ENCODE measurements at regions of chr1 and their contacts with region 1.

Region 1: GRCh38 chr1:84944767-84945486 is 51.9 kb upstream of the LPAR3 start:
- DNase-seq: peak; percentile 65
- H3K4me3 ChIP-seq: peak overlapping the region; percentile 46
- CTCF ChIP-seq: peak; percentile 75

Region 2: DNA sequence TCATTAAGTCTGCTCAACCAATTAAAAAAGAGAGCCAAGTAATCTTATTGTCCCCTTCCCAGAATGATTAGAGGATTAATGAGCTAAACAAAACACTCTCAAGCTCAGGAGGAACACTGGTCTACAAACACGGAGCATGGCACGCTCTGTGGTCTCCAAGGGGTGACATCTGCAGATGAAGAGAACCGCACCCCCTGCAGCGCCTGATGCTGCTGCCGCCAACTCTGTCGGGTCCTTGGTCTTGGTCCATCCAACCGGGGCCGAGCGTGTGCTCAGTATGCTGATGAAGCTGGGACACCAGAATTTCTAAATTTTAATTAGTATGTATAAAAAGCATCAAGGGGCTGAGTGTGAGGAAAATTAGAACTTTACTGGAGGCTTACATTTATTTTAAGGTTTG is 134.6 kb before region 1 on chr1:
- CTCF ChIA-PET with region 1: no interaction called
- POLR2A ChIA-PET with region 1: no interaction called
- DNase-seq: no peak
- H3K4me3 ChIP-seq: no peak overlapping the region
- CTCF ChIP-seq: no peak

Region 3: DNA sequence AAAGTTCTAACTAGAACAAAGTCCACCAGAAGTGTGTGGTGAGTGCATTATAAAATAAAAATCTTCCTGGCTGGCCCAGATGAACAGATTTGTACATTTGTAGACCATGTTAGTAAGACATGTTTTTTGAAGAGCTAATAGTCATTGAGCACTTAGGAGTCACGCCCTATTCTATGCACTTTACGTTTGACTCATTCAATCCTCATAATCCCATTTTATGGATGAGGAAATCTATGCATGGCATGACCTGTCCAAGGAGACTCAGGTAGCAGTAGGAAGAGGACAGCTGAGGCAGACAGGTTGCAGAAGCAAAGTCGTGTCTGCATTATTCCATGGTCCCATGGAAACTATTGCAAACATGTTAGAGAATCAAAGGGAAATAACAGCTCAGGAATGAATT is 21.6 kb before region 1 on chr1:
- CTCF ChIA-PET with region 1: interaction called, 12 read pairs
- POLR2A ChIA-PET with region 1: no interaction called
- DNase-seq: no peak
- H3K4me3 ChIP-seq: no peak overlapping the region
- CTCF ChIP-seq: no peak

Region 4: DNA sequence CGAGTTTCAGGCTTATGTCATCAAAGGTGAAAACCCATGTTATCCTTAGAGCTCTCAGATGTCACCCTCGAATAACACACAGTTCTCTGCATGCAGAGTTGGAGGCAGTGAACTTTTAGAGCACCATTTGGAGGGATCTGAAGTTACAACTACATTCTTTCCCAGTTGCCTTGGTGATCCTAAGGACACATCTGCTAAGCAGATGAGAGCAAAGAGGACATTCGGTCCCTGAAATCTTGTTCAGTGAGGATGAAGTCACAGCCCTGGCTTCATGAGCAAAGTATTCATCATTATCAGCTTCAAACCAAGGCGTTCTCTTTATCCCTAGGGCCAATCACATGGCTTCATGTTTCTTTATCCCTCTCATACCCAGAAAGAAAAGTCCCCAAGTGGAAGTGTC is 75.1 kb after region 1 on chr1:
- CTCF ChIA-PET with region 1: interaction called, 124 read pairs
- POLR2A ChIA-PET with region 1: no interaction called
- DNase-seq: peak; percentile 26
- H3K4me3 ChIP-seq: no peak overlapping the region
- CTCF ChIP-seq: no peak

Region 5: GRCh38 chr1:85048296-85049064 is 103.6 kb after region 1 on chr1 and contains the start of gene MCOLN3:
- CTCF ChIA-PET with region 1: interaction called, 10 read pairs
- POLR2A ChIA-PET with region 1: no interaction called
- DNase-seq: no peak
- H3K4me3 ChIP-seq: peak within 1 kb of the TSS; percentile 36
- CTCF ChIP-seq: no peak

Region 6: DNA sequence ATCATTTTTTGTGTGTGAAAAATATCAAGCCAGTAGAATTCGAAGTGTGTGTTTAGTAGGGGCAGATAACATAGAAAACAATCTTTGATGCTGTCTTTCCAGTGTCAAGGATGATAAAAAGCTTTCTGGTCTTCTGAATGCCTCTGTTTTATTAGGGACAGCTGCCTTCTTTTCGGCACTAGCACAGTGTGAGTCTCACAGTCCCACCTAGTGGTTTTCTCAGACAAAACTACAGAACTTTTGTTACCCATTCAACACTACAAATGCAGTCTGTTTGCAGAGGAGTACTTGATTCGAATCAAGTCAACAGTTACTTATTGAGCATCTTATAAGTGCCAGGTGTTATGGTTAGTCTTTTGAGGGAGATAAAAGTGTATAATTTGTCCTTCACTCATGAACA is 134.0 kb after region 1 on chr1:
- CTCF ChIA-PET with region 1: interaction called, 147 read pairs
- POLR2A ChIA-PET with region 1: no interaction called
- DNase-seq: no peak
- H3K4me3 ChIP-seq: no peak overlapping the region
- CTCF ChIP-seq: peak; percentile 29

Region 7: GRCh38 chr1:85259118-85259911 is 314.4 kb after region 1 on chr1 and contains the start of gene C1orf52:
- CTCF ChIA-PET with region 1: interaction called, 365 read pairs
- POLR2A ChIA-PET with region 1: interaction called, 8 read pairs
- DNase-seq: peak; percentile 62
- H3K4me3 ChIP-seq: peak within 1 kb of the TSS; percentile 93
- CTCF ChIP-seq: peak; percentile 98